Activated CD4-positive, alpha-beta memory T cell treated with anti-CD3 and anti-CD28 coated beads for 36 hours (primary cell): ENCODE measurements at regions of chr11 and their contacts with region 1.

Region 1: GRCh38 chr11:2975594-2975993 is 16.5 kb downstream of the NAP1L4 start:
- DNase-seq: peak; percentile 53
- H3K4me3 Mint-ChIP-seq: no peak overlapping the region
- H3K27ac Mint-ChIP-seq: no peak overlapping the region
- H3K4me1 Mint-ChIP-seq: peaks cover 28% of the 10 kb centered on the region
- H3K27me3 Mint-ChIP-seq: no peaks in the 10 kb centered on the region

Region 2: GRCh38 chr11:3000082-3000961 is 24.7 kb after region 1 on chr11:
- CTCF ChIA-PET with region 1: interaction called, 16 read pairs
- POLR2A ChIA-PET with region 1: interaction called, 3 read pairs
- intact Hi-C with region 1: no loop called
- DNase-seq: no peak
- H3K4me3 Mint-ChIP-seq: no peak overlapping the region
- H3K27ac Mint-ChIP-seq: peak overlapping the region; percentile 28
- H3K4me1 Mint-ChIP-seq: peaks cover 3% of the 10 kb centered on the region
- H3K27me3 Mint-ChIP-seq: no peaks in the 10 kb centered on the region

Region 3: GRCh38 chr11:3014057-3014938 is 38.7 kb after region 1 on chr11:
- CTCF ChIA-PET with region 1: interaction called, 9 read pairs
- POLR2A ChIA-PET with region 1: no interaction called
- intact Hi-C with region 1: loop called (anchors 5 kb)
- DNase-seq: peak; percentile 82
- H3K4me3 Mint-ChIP-seq: no peak overlapping the region
- H3K27ac Mint-ChIP-seq: peak overlapping the region; percentile 77
- H3K4me1 Mint-ChIP-seq: peaks cover 55% of the 10 kb centered on the region
- H3K27me3 Mint-ChIP-seq: no peaks in the 10 kb centered on the region

Region 4: GRCh38 chr11:3021125-3021524 is 45.5 kb after region 1 on chr11:
- CTCF ChIA-PET with region 1: interaction called, 17 read pairs
- POLR2A ChIA-PET with region 1: interaction called, 3 read pairs
- intact Hi-C with region 1: loop called (anchors 1 kb)
- DNase-seq: peak; percentile 39
- H3K4me3 Mint-ChIP-seq: no peak overlapping the region
- H3K27ac Mint-ChIP-seq: no peak overlapping the region
- H3K4me1 Mint-ChIP-seq: peaks cover 30% of the 10 kb centered on the region
- H3K27me3 Mint-ChIP-seq: no peaks in the 10 kb centered on the region

Region 5: DNA sequence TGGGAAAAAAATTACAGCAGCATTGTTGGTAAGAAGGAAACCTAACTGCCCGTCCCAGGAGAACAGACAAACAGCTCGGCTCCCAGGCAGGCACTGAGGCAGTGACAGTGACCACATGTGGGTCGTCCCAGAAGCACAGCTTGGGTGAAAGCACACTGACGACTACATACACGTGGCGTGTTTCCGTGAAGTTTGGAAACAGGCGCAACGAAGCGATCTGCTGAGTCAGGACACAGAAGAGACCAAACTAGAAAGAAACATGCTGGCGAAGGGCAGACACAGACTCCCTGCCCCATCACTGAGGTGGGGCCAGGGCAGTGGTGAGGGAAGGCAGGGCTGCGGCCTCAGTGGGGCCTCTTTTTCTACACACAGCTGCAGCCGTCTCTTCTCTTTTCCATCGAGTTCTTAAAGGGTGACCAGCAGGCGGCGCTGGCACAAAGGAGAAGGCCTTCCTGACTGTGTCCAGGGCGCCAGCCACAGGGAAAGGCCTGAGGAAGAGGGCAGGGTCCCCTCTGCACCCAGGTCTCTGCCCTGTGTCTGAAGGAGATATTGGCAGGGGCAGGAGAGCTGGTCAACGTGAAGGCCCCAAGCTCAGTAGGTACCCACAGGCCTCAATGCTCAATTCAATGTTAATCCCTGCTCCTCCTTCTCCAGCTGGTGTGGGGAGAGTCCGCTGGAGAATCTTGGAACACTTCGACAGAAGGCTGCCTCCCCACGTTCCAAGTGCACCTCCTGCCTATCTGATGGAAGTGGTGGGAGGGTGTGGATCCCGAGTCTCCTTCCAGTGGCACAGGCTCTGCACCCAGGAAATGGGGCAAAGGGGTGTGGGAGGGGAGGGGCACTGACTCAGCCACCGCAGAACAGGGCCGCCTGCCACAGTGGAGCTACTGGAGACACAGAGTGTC is 61.7 kb after region 1 on chr11:
- CTCF ChIA-PET with region 1: interaction called, 10 read pairs
- POLR2A ChIA-PET with region 1: no interaction called
- intact Hi-C with region 1: no loop called
- DNase-seq: peak; percentile 61
- H3K4me3 Mint-ChIP-seq: no peak overlapping the region
- H3K27ac Mint-ChIP-seq: peak overlapping the region; percentile 1
- H3K4me1 Mint-ChIP-seq: peaks cover 20% of the 10 kb centered on the region
- H3K27me3 Mint-ChIP-seq: no peaks in the 10 kb centered on the region

Region 6: DNA sequence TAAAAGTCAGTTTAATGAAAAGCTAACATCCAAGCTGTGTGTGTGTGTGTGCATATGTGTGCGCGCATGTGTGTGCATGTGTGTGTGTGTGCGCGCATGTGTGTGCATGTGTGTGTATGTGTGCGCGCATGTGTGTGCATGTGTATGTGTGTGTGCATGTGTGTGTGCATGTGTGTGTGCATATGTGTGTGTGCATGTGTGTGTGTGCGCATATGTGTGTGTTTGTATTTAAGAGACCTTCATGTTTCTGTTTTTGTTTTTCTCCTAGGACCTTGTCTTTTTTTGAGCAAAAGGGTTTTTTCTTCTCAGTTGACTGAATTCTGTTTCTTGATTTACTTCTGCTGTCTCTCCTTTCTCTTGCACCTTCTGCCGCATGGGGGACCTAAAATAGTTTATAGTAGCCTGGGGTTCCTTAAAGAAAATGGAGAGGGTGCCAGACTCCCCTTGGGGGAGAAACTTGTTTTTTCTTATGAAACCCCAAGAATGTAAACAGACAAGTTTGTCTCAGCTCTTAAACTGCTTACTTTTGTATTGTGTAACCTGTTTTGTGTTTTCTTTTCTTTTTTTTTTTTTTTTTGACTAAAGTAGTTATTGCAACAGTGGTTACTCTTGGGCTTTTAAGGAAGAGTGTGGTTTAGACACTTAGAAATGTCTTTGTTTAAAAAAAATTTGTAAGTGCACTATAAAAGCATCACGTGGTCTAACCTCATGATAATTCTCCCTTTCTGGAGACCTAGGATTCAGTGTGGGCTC is 136.5 kb after region 1 on chr11:
- CTCF ChIA-PET with region 1: no interaction called
- POLR2A ChIA-PET with region 1: no interaction called
- intact Hi-C with region 1: no loop called
- DNase-seq: no peak
- H3K4me3 Mint-ChIP-seq: no peak overlapping the region
- H3K27ac Mint-ChIP-seq: no peak overlapping the region
- H3K4me1 Mint-ChIP-seq: no peaks in the 10 kb centered on the region
- H3K27me3 Mint-ChIP-seq: peaks cover 2% of the 10 kb centered on the region